ENCODE measurements at regions of chr20 and their contacts with region 1.

Region 1: GRCh38 chr20:20052074-20052970 is at the starts of genes CFAP61 and CRNKL1:
- DNase-seq: peak; percentile 98
- ATAC-seq: peak; percentile 100
- H3K4me3 ChIP-seq: peak within 1 kb of the TSS; percentile 50 to 75
- H3K27ac ChIP-seq: peak within 1 kb of the TSS in 1 of 2 donors; percentile 60
- H3K4me1 ChIP-seq: peaks cover 0 to 3% of the 10 kb centered on the region in 2 donors
- H3K27me3 ChIP-seq: no peaks in the 10 kb centered on the region
- total RNA-seq, gene CFAP61: 0.91 TPM in 1 of 2 donors, not detected in the other
- total RNA-seq, gene CRNKL1: 17.6 to 21.0 TPM

Region 2: GRCh38 chr20:18587665-18588573 is 1464.4 kb before region 1 on chr20 and contains the start of gene DTD1:
- intact Hi-C with region 1: loop called in 1 of 2 experiments (anchors 5 kb)
- DNase-seq: peak; percentile 96 to 99
- ATAC-seq: peak; percentile 97
- H3K4me3 ChIP-seq: peak within 1 kb of the TSS; percentile 67 to 77
- H3K27ac ChIP-seq: peak within 1 kb of the TSS in 1 of 2 donors; percentile 7
- H3K4me1 ChIP-seq: no peaks in the 10 kb centered on the region
- H3K27me3 ChIP-seq: no peaks in the 10 kb centered on the region
- total RNA-seq, gene DTD1: 20.0 to 20.2 TPM